Cardiac septum (tissue), 1 donor: ENCODE measurements at regions of chr13 and their contacts with region 1.

Region 1: DNA sequence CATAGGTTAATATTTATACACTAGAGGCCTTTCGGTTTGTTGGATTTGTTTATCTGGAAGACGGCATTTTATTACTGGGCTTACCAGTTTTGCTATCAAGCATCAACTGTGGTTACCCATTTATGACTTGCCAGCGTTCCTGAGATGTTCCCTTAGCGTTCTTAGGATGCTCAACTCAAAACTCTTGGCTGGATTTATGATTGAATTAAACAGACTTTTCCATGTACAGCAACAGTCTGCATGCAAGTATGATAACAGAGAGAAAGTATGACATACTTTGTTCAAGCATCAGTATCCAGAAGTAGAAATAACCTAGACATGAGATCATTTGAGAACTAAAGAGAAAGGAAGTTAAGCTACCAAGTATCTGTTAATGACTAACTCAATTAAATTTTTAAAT is 29.9 kb upstream of the RNF113B start:
- DNase-seq: no peak

Region 2: DNA sequence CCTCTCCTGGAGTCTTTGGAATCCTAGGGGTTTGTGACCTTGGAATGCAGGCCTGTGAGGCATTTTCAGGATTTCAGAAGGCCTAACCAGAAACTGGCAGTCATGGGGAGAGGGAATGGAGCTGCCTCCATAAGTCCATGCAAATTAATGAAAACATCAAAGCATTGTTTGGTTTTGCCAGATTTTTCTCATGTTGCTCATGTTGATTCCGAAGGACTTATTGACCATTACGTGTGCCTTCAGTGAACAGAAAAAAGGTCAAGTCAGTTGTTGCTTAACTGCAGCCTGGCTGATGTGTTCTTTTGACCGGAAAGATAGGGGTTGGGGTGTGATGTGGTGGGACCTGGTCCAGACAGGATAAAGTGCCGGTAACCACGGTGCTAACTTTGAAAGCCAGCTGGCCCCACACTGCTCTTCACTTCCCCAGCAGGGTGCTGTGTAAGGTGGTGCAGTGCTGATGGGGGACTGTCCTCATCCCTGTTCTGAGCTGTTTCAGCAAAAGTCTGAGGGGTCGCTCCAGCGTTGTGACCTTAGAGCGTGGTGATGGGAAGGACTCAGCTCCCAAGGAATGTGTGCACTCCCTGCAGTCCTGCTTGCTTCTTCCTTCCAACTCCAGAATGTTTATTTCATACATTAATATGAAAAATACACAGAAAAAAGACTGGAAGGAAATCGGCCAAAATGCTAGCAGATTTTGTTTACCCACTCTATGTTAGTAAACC is 33.4 kb before region 1 on chr13:
- intact Hi-C with region 1: loop called (anchors 2 kb)
- DNase-seq: no peak